ENCODE measurements at regions of chr6 and their contacts with region 1.

Region 1: DNA sequence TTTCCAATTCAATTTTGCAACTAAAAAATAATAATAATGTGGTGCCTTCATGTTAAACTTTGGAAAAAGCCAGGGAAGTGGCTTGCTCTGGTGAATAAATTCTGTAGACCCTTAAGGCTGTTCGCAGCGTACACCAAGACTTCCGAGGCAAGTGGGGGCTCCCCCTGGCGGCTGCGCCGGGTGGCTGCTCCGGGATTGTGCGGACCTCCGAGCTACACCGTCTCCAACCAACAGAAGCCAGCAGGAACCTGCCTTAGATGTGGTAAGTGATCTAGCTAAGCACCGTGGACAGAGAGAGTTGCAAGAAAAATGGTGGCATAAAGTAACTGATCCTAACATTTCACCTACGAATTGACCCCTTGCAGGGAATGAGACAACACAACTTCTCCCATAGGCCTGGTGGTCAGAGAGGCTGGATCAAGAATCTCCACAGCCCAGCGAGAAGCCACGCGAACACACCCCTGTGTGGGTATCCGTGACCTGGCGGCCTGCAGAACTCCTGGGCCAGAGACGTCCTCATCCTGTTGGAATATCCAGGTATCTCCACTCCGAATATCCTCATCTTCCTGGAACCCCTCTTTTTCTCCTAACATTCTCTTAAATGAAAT is 69.6 kb downstream of the TBXT start:
- DNase-seq: no peak

Region 2: DNA sequence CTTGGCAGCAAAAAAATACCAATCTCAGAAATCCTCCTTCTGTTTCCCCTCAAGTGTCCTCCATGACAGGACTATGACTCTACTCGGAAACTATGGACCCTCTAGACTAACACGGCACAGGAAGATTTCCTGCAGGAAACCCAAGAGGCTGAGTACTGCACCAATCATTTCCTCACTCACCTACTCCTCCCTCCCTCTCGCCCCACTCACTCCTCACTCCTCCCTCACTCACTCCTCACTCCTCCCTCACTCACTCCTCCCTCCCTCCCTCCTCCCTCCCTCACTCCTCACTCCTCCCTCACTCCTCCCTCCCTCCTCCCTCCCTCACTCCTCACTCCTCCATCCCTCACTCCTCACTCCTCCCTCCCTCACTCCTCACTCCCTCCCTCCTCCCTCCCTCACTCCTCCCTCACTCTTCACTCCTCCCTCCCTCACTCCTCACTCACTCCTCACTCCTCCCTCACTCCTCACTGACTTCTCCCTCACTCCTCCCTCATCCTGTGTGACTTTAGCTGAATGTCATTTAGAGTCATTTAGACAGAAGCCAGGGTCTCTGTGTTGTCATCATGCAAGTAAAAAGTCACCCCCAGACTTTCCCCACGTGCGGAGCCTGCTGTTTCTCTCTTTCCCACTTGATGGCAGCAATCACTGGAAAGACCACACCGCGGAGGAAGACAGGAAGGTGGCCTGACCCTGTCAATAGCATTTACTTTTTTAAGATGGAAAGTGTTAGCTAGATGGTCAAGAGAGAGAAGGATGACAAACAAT is 208.2 kb before region 1 on chr6:
- intact Hi-C with region 1: loop called (anchors 2 kb)
- DNase-seq: no peak

Region 3: DNA sequence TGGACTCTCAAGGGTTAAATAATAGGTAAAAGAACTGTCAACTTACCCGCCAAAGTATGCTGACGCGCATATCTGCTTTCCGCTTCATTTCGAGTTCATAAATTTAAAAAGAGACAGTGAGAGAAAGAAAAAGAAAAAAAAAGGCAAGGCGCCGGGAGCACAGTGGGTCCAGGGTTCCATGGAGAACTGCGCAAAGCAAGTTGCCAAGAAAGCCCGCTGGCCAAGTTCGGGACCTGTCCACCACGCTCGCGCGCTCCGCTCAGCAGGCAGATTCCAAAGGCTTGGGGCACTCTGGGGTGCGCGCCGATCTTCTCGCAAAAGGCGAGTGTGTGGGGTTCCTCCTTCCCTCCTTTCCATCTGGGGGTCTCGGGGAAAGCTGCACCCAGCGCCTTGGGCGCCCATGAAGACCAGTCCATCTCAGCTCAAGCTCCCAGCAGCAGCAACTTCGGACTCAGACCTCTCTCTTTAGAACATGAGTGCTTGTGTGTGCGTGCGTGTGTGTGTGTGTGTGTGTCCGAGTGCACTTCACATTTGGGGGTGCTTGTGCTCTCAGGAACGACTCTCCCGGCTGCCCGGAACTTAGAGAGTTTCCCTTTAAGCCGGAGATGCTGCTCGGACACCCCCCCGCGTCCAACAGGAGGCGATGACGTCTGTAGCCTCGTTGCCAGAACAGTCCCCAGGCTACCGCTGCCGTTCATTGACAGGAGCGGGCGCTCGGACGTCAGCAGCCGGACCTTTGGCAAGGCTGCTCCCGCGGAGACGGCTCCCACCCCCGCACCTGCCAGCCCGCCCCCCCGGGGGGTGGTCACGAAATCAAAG is 110.3 kb before region 1 on chr6:
- intact Hi-C with region 1: loop called (anchors 10 kb)
- DNase-seq: peak; percentile 88

Region 4: GRCh38 chr6:166153966-166154365 is 55.9 kb after region 1 on chr6:
- intact Hi-C with region 1: no loop called
- DNase-seq: no peak

Measured in cardiac septum (tissue), 1 donor.